ENCODE measurements at regions of chr1 and their contacts with region 1.

Region 1: DNA sequence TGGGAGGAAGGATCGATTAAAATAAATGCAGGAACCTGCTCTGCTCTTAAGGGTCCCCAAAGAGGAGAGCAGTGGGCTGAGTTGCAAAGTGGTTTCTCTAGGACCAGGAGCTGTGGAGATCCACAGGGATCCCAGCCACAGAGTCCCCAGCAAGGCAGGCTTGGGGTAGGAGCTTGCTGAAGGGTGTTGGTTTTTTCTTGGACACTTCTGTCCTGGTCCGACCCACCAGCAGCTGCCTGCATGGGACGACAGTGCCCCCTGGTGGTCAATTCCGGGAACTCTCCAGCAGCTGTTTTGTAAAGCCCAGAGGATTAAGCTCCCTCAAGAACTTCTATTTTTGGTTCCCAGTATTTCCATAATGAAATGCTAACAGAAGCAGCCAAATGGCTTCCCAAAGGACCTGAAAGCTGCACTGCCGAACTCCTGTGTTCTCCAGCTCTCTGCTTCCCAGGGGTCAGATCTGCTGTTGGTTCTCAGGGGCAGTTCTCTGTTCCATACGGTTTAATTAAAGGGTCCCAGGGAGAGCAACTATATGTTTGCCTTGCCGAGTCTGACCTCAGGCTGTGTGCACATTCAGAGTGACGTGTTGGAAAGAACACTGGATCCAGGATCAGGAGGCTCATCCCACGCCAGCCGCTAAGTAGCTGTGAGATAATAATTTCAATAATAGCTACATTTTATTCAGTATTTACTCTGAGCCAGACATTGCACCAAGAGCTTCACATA is 23.2 kb downstream of the NENF start:
- DNase-seq: peak; percentile 55 to 80
- H3K4me3 ChIP-seq: no peak overlapping the region
- H3K27ac ChIP-seq: no peak overlapping the region
- H3K4me1 ChIP-seq: no peaks in the 10 kb centered on the region
- H3K27me3 ChIP-seq: no peaks in the 10 kb centered on the region
- CTCF ChIP-seq: peak; percentile 95

Region 2: GRCh38 chr1:211680752-211681327 is 775.1 kb before region 1 on chr1:
- CTCF ChIA-PET with region 1: interaction called, 23 read pairs
- POLR2A ChIA-PET with region 1: no interaction called
- intact Hi-C with region 1: loop called (anchors 1 kb)
- DNase-seq: peak; percentile 63 to 81
- H3K4me3 ChIP-seq: no peak overlapping the region
- H3K27ac ChIP-seq: no peak overlapping the region
- H3K4me1 ChIP-seq: no peaks in the 10 kb centered on the region; the same call in 1 of the 2 replicates
- H3K27me3 ChIP-seq: no peaks in the 10 kb centered on the region
- CTCF ChIP-seq: peak; percentile 79

Region 3: DNA sequence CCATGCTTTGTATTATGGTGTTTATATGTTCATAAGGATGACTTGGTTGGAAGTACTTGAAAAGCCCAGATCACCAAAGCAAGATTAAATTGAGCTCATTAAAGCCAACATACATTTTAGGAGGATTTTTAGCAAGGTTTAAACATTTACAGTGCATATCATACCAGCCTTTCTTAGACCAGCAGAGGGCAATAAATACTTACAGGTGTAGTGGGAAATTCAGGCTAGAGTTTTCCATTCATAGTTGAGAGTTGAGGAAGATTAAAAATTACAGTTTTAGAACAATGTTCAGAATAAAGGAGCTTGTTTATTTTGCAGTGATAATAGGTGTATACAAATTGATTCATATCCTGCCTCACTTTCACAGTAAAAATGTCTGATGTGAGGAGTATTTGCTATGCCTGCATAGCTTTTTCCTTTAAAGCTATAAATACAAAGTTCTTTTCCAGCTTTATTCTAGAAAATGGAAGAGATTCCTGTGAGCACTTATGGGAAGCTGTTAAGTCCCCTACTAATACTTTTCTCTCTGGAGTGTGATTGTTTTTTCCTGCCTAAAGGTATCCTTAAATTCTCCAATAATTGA is 385.2 kb before region 1 on chr1:
- CTCF ChIA-PET with region 1: interaction called, 24 read pairs
- POLR2A ChIA-PET with region 1: interaction called, 3 read pairs
- intact Hi-C with region 1: loop called (anchors 1 kb)
- DNase-seq: no peak
- H3K4me3 ChIP-seq: no peak overlapping the region
- H3K27ac ChIP-seq: no peak overlapping the region
- H3K4me1 ChIP-seq: no peaks in the 10 kb centered on the region
- H3K27me3 ChIP-seq: no peaks in the 10 kb centered on the region
- CTCF ChIP-seq: peak; percentile 75

Region 4: DNA sequence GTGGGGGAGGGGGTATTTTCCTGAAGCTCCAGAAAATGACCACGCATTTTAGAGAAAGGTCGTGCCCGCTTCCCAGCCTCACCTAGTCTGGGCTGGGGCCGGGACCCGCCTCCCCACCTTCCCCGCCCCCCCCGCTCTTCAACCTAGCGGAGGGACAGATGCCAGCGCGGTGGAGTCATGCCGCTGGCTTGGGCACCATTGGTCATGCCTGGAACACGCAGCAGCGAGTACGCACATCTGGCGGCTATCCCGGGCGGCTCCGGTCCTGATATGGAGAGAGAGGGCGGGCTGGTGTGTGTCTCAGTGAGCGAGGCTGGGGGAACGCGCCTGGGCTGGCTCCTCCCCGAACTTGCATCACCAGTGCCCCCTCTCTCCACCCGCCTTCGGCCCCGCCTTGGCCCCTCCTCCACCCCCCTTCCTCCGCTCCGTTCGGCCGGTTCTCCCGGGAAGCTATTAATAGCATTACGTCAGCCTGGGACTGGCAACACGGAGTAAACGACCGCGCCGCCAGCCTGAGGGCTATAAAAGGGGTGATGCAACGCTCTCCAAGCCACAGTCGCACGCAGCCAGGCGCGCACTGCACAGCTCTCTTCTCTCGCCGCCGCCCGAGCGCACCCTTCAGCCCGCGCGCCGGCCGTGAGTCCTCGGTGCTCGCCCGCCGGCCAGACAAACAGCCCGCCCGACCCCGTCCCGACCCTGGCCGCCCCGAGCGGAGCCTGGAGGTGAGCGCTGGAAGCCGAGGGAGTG is 152.4 kb after region 1 on chr1 and contains the start of gene ATF3:
- CTCF ChIA-PET with region 1: no interaction called
- POLR2A ChIA-PET with region 1: interaction called, 10 read pairs
- intact Hi-C with region 1: no loop called
- DNase-seq: peak; percentile 89 to 99
- H3K4me3 ChIP-seq: peak within 1 kb of the TSS; percentile 96
- H3K27ac ChIP-seq: peak within 1 kb of the TSS; percentile 72
- H3K4me1 ChIP-seq: peaks cover 28% of the 10 kb centered on the region
- H3K27me3 ChIP-seq: peaks cover 57% of the 10 kb centered on the region
- CTCF ChIP-seq: no peak
- total RNA-seq, gene ATF3: 10.2 and 10.8 TPM in 2 replicates

Region 5: DNA sequence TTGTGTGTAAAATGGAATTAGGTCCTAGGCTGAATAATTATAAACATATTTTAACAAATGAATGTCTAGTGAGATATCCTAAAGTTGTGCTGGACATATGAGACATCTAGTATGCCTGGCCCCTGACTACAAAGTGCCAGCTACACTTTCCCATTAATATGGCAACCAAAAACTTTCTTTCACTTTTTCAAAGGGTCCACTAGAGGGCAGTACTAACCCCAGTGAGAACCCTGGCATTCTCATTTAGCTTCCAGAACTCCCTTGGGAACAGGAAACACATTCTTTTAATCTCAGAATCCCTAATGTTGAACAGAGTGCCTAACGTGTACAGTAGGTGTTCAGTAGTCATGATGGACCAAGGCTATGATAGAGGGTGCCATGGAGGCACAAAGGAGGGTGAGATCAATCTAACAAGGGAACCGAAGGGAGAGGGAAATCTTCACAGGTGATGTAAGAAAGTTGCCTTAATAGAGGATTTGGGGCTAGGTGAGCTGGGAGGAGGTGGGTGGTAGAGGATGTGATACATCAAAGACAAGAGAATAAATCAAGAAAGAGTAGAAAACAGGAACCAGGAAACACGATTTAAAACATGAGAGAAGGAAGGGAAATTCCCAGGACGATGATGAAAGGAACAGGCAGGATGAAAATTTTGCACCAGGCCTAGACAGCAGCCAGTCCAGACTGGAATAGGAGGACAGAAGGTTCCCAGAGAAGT is 294.0 kb after region 1 on chr1:
- CTCF ChIA-PET with region 1: interaction called, 5 read pairs
- POLR2A ChIA-PET with region 1: no interaction called
- intact Hi-C with region 1: loop called (anchors 1 kb)
- DNase-seq: peak; percentile 15 to 40
- H3K4me3 ChIP-seq: no peak overlapping the region
- H3K27ac ChIP-seq: no peak overlapping the region
- H3K4me1 ChIP-seq: no peaks in the 10 kb centered on the region
- H3K27me3 ChIP-seq: no peaks in the 10 kb centered on the region
- CTCF ChIP-seq: peak; percentile 84

Region 6: DNA sequence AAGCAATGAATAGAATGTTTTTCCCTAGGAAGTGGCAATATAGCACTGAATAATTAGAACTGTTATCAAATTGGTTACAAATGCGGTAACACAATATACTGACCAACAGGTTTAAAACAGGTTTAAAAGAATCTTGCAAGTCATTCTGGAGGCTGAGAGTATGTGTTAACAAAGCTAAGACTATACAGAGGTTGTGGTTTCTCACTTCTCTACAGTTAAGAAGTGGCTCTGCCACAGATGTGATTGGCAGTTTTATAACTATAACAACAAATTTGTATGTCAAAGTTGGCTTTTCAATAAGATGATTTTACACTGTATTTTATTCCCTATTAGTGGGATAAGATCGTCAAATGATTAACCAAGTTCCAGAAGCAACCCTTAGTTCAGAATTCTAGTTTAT is 552.6 kb after region 1 on chr1:
- CTCF ChIA-PET with region 1: interaction called, 10 read pairs
- POLR2A ChIA-PET with region 1: no interaction called
- intact Hi-C with region 1: no loop called
- DNase-seq: no peak
- H3K4me3 ChIP-seq: no peak overlapping the region
- H3K27ac ChIP-seq: no peak overlapping the region
- H3K4me1 ChIP-seq: peaks cover 1% of the 10 kb centered on the region; the same call in 1 of the 2 replicates
- H3K27me3 ChIP-seq: no peaks in the 10 kb centered on the region
- CTCF ChIP-seq: no peak

Measured in PC-9 (cell line).